Activated CD4-positive, alpha-beta T cell treated with anti-CD3 and anti-CD28 coated beads, Interleukin-2, amount 10 ng/mL, durations not matched to agents 24 days and 14 days (primary cell): ENCODE measurements at regions of chr18 and their contacts with region 1.

Region 1: DNA sequence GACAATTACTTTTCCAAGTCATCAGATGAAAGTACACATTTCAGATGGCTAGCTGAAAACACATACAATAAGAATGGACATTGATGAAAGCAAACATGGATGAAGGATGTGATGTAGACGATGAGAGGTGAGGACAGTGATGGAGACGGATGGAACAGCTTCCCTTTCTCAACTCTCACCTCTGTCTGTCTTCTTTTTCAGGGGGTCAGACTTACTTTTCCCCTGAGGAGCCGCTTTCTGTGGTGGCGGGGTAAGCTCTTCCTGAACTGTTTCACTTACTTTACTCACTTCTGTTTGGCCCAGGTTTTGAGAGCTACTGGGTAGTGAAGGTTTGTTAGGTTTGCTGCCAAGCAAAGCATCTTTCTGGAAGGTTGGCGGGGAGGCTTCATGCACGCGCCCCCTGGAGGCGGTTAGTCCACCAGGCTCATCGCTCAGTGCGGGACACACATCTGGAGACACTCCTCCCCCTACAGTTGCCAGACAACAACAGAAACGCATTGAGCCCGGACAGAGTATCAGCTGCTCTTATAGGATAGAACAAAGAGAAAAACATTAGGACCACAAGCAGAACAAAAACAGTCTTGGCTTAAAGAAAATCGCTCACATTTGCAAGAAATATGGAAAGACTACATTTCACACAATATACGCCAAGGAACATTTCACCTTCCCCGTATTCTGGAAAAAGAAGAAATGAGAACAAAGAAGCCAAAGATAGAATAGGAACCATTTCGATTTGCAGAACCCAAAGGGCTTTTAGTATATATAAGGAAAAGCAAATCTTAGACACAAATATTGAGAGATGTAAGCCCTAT is 90.5 kb downstream of the MYOM1 start:
- DNase-seq: peak; percentile 94
- H3K4me3 Mint-ChIP-seq: peak overlapping the region; percentile 10
- H3K27ac Mint-ChIP-seq: no peak overlapping the region
- H3K4me1 Mint-ChIP-seq: peaks cover 9% of the 10 kb centered on the region
- H3K27me3 Mint-ChIP-seq: no peaks in the 10 kb centered on the region

Region 2: DNA sequence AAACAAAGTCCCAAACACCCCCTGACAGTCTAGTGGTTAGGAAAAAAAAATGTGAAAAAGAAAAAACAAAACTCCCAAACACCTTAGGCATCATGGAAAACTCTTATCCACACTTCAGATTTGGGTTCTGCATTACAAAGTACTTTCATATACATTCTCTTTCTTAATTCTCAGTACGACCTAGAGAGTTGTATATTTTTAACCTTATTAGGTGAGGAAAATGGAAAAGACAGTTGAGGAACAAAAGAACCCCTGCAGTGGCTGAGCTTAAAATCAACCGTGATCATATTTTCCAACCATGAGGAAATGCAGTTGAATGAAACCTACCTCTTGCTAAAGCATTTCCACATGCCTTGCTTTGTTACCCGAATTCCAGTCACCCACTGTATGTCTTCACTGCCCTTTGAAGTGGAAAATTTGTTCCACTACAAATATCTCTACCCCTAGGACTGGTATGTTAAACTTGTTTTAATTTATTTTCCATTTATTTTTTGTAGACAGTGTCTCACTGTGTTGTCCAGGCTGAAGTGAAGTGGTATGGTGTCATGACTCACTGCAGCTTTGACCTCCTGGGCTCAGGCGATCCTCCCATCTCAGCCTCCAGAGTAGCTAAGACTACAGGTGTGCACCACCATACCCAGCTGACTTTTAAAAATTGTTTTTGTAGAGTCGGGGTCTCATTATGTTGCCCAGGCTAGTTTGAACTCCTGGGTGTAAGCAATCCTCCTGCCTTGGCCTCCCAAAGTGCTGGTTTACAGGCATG is 59.4 kb before region 1 on chr18:
- intact Hi-C with region 1: loop called (anchors 1 kb)
- DNase-seq: no peak
- H3K4me3 Mint-ChIP-seq: no peak overlapping the region
- H3K27ac Mint-ChIP-seq: peak overlapping the region; percentile 71
- H3K4me1 Mint-ChIP-seq: peaks cover 47% of the 10 kb centered on the region
- H3K27me3 Mint-ChIP-seq: no peaks in the 10 kb centered on the region